Endothelial cell of umbilical vein (primary cell): ENCODE measurements at regions of chr7 and their contacts with region 1.

Region 1: DNA sequence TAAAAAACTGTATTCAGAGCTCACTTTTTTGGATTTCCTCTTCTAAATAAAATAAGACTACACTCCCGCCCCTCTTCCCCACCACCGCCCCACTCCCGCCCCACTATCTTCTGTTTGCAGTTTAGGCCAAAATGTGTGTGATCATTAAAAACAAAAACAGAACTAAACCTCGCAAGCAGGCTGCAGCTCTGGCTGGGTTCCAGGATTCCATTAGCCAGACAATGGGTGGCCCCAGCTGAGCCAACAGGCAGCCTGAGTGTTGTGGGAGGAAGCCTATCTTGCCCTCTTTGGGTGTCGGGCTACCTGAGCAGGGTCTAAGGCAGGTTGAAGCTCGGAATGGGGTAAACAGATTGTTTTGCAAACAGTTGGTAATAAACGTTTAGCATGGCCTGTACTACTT is 41.7 kb downstream of the ARL4A start:
- DNase-seq: peak; percentile 94
- H3K4me3 ChIP-seq: no peak overlapping the region
- H3K27ac ChIP-seq: peak overlapping the region; percentile 92
- H3K4me1 ChIP-seq: peaks cover 48% of the 10 kb centered on the region
- H3K27me3 ChIP-seq: no peaks in the 10 kb centered on the region
- CTCF ChIP-seq: no peak
- POLR2A ChIP-seq: no peak

Region 2: DNA sequence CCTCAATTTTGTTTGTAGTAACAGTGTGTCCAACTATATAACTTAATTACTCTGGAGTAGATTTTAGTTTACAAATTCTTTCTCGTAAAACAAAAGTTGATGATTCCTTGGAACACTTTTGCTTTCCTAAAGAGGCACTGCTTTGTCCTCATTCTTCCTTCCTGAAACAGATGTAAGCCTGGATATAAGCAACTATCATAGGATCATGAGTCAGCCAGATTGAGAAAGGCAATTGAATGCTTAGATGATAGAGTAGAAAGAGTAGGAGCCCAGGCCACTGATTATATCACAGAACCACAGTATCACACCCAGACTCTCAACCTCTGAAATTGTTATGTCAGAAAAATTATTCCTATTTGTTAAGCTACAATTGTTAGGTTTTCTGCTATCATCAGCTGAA is 448.1 kb before region 1 on chr7:
- CTCF ChIA-PET with region 1: no interaction called
- POLR2A ChIA-PET with region 1: no interaction called
- dilution Hi-C with region 1: no loop called
- intact Hi-C with region 1: no loop called
- DNase-seq: peak; percentile 15
- H3K4me3 ChIP-seq: no peak overlapping the region
- H3K27ac ChIP-seq: no peak overlapping the region
- H3K4me1 ChIP-seq: no peaks in the 10 kb centered on the region
- H3K27me3 ChIP-seq: peaks cover 0 to 2% of the 10 kb centered on the region in 2 experiments
- CTCF ChIP-seq: no peak
- POLR2A ChIP-seq: no peak

Region 3: GRCh38 chr7:12570534-12571461 is 158.3 kb before region 1 on chr7 and contains the start of gene SCIN:
- CTCF ChIA-PET with region 1: no interaction called
- POLR2A ChIA-PET with region 1: no interaction called
- dilution Hi-C with region 1: no loop called
- intact Hi-C with region 1: no loop called
- DNase-seq: peak; percentile 31
- H3K4me3 ChIP-seq: peak within 1 kb of the TSS; percentile 1 to 25 (median 18)
- H3K27ac ChIP-seq: no peak within 1 kb of the TSS
- H3K4me1 ChIP-seq: peaks cover 9% of the 10 kb centered on the region
- H3K27me3 ChIP-seq: peaks cover 23 to 40% of the 10 kb centered on the region in 2 experiments
- CTCF ChIP-seq: no peak
- POLR2A ChIP-seq: no peak
- total RNA-seq, gene SCIN: 0.69 TPM in 1 of 2 replicates, not detected in the other

Region 4: DNA sequence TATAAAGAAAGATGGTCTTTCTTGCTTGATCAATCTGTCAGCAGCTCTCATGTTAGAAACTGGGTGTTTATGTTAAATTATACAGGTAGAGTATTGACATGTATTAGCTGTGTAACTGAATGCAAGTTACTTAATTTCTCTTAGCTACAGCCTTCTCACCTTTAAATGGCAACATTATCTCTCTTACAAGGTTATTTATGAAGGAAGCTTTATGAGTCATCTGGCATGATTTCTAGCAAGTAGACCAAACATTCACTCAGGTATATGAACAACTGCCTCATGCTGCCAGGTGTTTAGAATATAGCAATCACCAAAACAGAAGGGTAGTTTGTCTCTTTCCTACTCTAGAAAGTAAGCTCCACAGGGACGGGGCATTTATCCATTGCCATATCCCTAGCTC is 33.1 kb before region 1 on chr7:
- CTCF ChIA-PET with region 1: interaction called, 3 read pairs
- POLR2A ChIA-PET with region 1: interaction called, 10 read pairs
- dilution Hi-C with region 1: no loop called
- intact Hi-C with region 1: no loop called
- DNase-seq: peak; percentile 44
- H3K4me3 ChIP-seq: no peak overlapping the region
- H3K27ac ChIP-seq: no peak overlapping the region
- H3K4me1 ChIP-seq: peaks cover 2% of the 10 kb centered on the region
- H3K27me3 ChIP-seq: no peaks in the 10 kb centered on the region
- CTCF ChIP-seq: no peak
- POLR2A ChIP-seq: no peak

Region 5: DNA sequence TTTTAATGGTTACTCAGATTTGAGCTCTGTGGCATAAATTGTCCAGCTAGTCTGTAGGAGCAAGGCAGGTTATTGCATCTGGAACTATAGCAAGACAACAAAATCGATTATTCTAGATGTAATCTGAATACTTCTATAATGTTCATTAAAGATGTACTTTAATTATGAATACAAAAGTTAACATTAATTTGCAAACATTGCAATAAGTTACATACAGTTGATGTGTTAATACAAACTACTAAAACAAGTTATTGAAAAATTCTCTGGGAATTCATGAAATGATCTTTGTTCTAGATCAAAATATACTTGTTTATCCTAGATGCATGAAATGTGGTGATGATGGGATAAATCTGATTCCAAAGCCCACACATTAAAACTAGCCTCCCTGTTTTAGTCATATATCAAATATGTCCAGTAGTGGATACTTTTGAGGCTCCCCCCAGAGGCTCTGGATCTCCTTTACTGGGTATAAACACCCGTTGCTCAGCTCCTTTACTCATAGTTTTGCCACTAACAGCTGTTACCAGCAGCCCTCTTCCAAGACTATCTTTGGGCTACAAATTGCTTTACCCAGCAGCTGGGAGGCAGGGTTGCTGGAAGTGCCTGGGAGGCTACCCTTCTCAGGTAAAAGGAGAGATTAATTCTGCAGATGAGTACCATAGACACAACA is 36.5 kb after region 1 on chr7:
- CTCF ChIA-PET with region 1: interaction called, 6 read pairs
- POLR2A ChIA-PET with region 1: interaction called, 7 read pairs
- dilution Hi-C with region 1: no loop called
- intact Hi-C with region 1: loop called (anchors 1 kb)
- DNase-seq: no peak
- H3K4me3 ChIP-seq: no peak overlapping the region
- H3K27ac ChIP-seq: no peak overlapping the region
- H3K4me1 ChIP-seq: peaks cover 14% of the 10 kb centered on the region
- H3K27me3 ChIP-seq: no peaks in the 10 kb centered on the region
- CTCF ChIP-seq: no peak
- POLR2A ChIP-seq: no peak

Region 6: DNA sequence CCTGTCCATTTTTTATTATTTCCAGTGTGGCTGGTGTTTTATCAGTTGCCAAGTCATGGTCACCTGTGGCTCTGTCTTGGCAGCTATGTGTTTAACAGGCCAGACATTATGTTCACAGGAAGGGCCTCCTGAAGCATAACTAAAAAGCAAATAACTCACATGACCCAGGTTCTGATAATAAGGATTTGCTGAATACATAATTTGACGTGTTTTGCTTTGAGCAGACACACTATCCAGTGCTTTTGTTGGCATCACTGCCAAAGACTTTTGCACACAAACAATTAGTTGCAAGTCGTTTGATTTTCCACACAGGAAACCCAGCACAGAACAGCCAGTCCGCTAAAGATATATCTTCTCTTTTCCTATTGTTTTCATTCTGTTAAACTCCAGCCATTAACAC is 132.0 kb after region 1 on chr7:
- CTCF ChIA-PET with region 1: no interaction called
- POLR2A ChIA-PET with region 1: interaction called, 3 read pairs
- dilution Hi-C with region 1: no loop called
- intact Hi-C with region 1: loop called (anchors 1 kb)
- DNase-seq: peak; percentile 99
- H3K4me3 ChIP-seq: no peak overlapping the region
- H3K27ac ChIP-seq: peak overlapping the region; percentile 76
- H3K4me1 ChIP-seq: peaks cover 17% of the 10 kb centered on the region
- H3K27me3 ChIP-seq: no peaks in the 10 kb centered on the region
- CTCF ChIP-seq: no peak
- POLR2A ChIP-seq: no peak

Region 7: GRCh38 chr7:12895296-12895695 is 166.2 kb after region 1 on chr7:
- CTCF ChIA-PET with region 1: no interaction called
- POLR2A ChIA-PET with region 1: no interaction called
- dilution Hi-C with region 1: no loop called
- intact Hi-C with region 1: no loop called
- DNase-seq: no peak
- H3K4me3 ChIP-seq: no peak overlapping the region
- H3K27ac ChIP-seq: no peak overlapping the region
- H3K4me1 ChIP-seq: no peaks in the 10 kb centered on the region
- H3K27me3 ChIP-seq: no peaks in the 10 kb centered on the region
- CTCF ChIP-seq: no peak
- POLR2A ChIP-seq: no peak

Region 8: DNA sequence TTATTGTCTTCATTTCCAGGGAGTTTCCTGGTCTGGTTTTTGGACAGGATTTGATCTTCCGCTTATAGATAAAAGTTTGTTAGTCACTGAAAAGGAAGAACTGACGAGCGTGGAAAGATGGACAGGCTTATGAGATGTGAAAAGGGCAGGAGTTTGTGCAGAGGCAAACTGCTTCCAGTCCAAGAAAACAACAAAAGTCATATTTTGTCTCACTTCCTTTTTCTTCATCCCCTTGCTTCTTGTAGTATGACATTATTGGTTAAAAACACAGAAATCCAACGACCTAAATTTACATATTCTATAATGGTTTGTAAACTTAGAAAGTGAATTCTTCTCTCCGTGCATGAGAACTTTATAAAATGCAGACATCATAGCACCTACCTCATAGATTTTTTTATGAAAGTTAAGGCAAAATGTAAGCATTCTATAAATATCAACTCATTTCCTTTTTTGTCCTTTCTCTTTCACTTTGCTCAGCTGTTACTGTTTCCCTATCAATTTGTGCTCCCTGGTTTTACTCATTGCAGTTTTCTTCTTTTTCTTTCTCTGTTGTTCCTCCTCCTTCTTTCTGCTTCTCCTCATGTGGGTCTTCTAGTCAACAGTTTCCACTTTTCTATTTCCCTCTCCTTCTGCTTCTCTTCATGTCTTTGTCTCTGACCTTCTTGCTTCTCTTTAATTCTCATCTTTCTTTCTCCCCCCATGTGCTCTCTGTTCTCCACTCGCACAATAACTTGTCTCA is 328.5 kb after region 1 on chr7:
- CTCF ChIA-PET with region 1: no interaction called
- POLR2A ChIA-PET with region 1: no interaction called
- dilution Hi-C with region 1: no loop called
- intact Hi-C with region 1: loop called (anchors 2 kb)
- DNase-seq: peak; percentile 79
- H3K4me3 ChIP-seq: peak overlapping the region in 2 of 3 experiments; percentile 36 to 56
- H3K27ac ChIP-seq: peak overlapping the region; percentile 81
- H3K4me1 ChIP-seq: peaks cover 13% of the 10 kb centered on the region
- H3K27me3 ChIP-seq: no peaks in the 10 kb centered on the region
- CTCF ChIP-seq: no peak
- POLR2A ChIP-seq: no peak